ENCODE measurements at regions of chr5 and their contacts with region 1.

Region 1: GRCh38 chr5:131589510-131590348 is 45.3 kb downstream of the RAPGEF6 start:
- DNase-seq: peak; percentile 58
- H3K4me3 Mint-ChIP-seq: no peak overlapping the region
- H3K27ac Mint-ChIP-seq: no peak overlapping the region
- H3K4me1 Mint-ChIP-seq: peaks cover 8% of the 10 kb centered on the region
- H3K27me3 Mint-ChIP-seq: no peaks in the 10 kb centered on the region
- CTCF ChIP-seq: peak; percentile 98

Region 2: GRCh38 chr5:131423056-131423455 is 166.7 kb before region 1 on chr5:
- CTCF ChIA-PET with region 1: interaction called, 3 read pairs
- POLR2A ChIA-PET with region 1: no interaction called
- intact Hi-C with region 1: loop called (anchors 5 kb)
- DNase-seq: peak; percentile 38
- H3K4me3 Mint-ChIP-seq: no peak overlapping the region
- H3K27ac Mint-ChIP-seq: no peak overlapping the region
- H3K4me1 Mint-ChIP-seq: no peaks in the 10 kb centered on the region
- H3K27me3 Mint-ChIP-seq: no peaks in the 10 kb centered on the region
- CTCF ChIP-seq: peak; percentile 50

Region 3: GRCh38 chr5:131605086-131605485 is 15.4 kb after region 1 on chr5:
- CTCF ChIA-PET with region 1: interaction called, 55 read pairs
- POLR2A ChIA-PET with region 1: interaction called, 4 read pairs
- intact Hi-C with region 1: no loop called
- DNase-seq: no peak
- H3K4me3 Mint-ChIP-seq: no peak overlapping the region
- H3K27ac Mint-ChIP-seq: no peak overlapping the region
- H3K4me1 Mint-ChIP-seq: peaks cover 23% of the 10 kb centered on the region
- H3K27me3 Mint-ChIP-seq: no peaks in the 10 kb centered on the region
- CTCF ChIP-seq: no peak

Region 4: GRCh38 chr5:131628990-131629389 is 39.3 kb after region 1 on chr5:
- CTCF ChIA-PET with region 1: interaction called, 22 read pairs
- POLR2A ChIA-PET with region 1: interaction called, 6 read pairs
- intact Hi-C with region 1: loop called (anchors 1 kb)
- DNase-seq: peak; percentile 57
- H3K4me3 Mint-ChIP-seq: no peak overlapping the region
- H3K27ac Mint-ChIP-seq: peak overlapping the region; percentile 62
- H3K4me1 Mint-ChIP-seq: peaks cover 23% of the 10 kb centered on the region
- H3K27me3 Mint-ChIP-seq: no peaks in the 10 kb centered on the region
- CTCF ChIP-seq: no peak

Region 5: GRCh38 chr5:131654776-131655175 is 65.0 kb after region 1 on chr5:
- CTCF ChIA-PET with region 1: interaction called, 17 read pairs
- POLR2A ChIA-PET with region 1: interaction called, 5 read pairs
- intact Hi-C with region 1: no loop called
- DNase-seq: no peak
- H3K4me3 Mint-ChIP-seq: no peak overlapping the region
- H3K27ac Mint-ChIP-seq: no peak overlapping the region
- H3K4me1 Mint-ChIP-seq: peaks cover 11% of the 10 kb centered on the region
- H3K27me3 Mint-ChIP-seq: no peaks in the 10 kb centered on the region
- CTCF ChIP-seq: no peak

Region 6: GRCh38 chr5:131706281-131706680 is 116.6 kb after region 1 on chr5:
- CTCF ChIA-PET with region 1: interaction called, 13 read pairs
- POLR2A ChIA-PET with region 1: no interaction called
- intact Hi-C with region 1: no loop called
- DNase-seq: no peak
- H3K4me3 Mint-ChIP-seq: no peak overlapping the region
- H3K27ac Mint-ChIP-seq: no peak overlapping the region
- H3K4me1 Mint-ChIP-seq: no peaks in the 10 kb centered on the region
- H3K27me3 Mint-ChIP-seq: no peaks in the 10 kb centered on the region
- CTCF ChIP-seq: no peak

Region 7: GRCh38 chr5:131810510-131811249 is 221.0 kb after region 1 on chr5:
- CTCF ChIA-PET with region 1: interaction called, 10 read pairs
- POLR2A ChIA-PET with region 1: no interaction called
- intact Hi-C with region 1: loop called (anchors 1 kb)
- DNase-seq: peak; percentile 40
- H3K4me3 Mint-ChIP-seq: no peak overlapping the region
- H3K27ac Mint-ChIP-seq: no peak overlapping the region
- H3K4me1 Mint-ChIP-seq: peaks cover 13% of the 10 kb centered on the region
- H3K27me3 Mint-ChIP-seq: no peaks in the 10 kb centered on the region
- CTCF ChIP-seq: peak; percentile 63